AG04449 (cell line): ENCODE measurements at regions of chr3 and their contacts with region 1.

Region 1: DNA sequence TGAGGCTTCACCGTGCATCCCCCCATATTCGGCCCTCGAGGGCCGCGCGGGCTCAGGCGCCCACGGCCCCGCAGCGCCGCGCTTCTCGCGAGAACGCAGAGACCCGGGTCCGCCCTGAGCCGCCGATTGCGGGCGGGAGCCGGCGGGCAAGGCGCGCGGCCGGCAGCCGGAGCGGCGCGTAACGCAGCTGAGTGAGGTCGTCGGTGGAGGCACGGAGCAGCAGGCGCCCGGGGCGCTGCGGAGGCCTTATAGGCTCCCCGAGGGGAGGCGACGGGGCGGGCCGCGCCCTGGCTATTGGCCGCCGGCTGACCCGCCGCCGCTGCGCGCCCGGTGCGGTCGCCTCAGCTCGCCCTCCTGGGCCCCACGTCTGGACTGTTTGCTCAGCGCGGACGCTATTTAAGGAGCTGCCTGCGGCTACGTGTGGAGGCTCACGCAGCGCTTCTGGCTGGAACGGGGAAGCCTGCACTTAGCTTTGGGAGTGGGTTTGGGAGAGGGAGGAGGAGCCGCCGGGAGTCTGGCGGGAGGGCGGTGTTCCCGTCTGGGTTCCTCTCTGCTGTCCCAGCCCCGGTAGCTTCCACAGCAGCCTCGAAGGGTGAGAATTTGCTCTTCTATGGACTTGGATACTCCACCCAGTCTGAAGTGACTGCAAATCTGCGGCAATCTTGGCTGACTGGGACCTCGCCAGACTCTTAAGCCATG is at the start of gene PLOD2:
- DNase-seq: peak; percentile 83
- H3K4me3 ChIP-seq: peak within 1 kb of the TSS; percentile 93
- CTCF ChIP-seq: no peak

Region 2: GRCh38 chr3:146117406-146118285 is 43.5 kb before region 1 on chr3:
- CTCF ChIA-PET with region 1: interaction called, 4 read pairs
- POLR2A ChIA-PET with region 1: interaction called, 15 read pairs
- DNase-seq: peak; percentile 88
- H3K4me3 ChIP-seq: no peak overlapping the region
- CTCF ChIP-seq: no peak

Region 3: GRCh38 chr3:146125951-146126350 is 35.2 kb before region 1 on chr3:
- CTCF ChIA-PET with region 1: interaction called, 9 read pairs
- POLR2A ChIA-PET with region 1: interaction called, 17 read pairs
- DNase-seq: peak; percentile 83
- H3K4me3 ChIP-seq: no peak overlapping the region
- CTCF ChIP-seq: no peak

Region 4: GRCh38 chr3:146131616-146132410 is 29.3 kb before region 1 on chr3:
- CTCF ChIA-PET with region 1: interaction called, 9 read pairs
- POLR2A ChIA-PET with region 1: interaction called, 17 read pairs
- DNase-seq: peak; percentile 76
- H3K4me3 ChIP-seq: no peak overlapping the region
- CTCF ChIP-seq: no peak

Region 5: DNA sequence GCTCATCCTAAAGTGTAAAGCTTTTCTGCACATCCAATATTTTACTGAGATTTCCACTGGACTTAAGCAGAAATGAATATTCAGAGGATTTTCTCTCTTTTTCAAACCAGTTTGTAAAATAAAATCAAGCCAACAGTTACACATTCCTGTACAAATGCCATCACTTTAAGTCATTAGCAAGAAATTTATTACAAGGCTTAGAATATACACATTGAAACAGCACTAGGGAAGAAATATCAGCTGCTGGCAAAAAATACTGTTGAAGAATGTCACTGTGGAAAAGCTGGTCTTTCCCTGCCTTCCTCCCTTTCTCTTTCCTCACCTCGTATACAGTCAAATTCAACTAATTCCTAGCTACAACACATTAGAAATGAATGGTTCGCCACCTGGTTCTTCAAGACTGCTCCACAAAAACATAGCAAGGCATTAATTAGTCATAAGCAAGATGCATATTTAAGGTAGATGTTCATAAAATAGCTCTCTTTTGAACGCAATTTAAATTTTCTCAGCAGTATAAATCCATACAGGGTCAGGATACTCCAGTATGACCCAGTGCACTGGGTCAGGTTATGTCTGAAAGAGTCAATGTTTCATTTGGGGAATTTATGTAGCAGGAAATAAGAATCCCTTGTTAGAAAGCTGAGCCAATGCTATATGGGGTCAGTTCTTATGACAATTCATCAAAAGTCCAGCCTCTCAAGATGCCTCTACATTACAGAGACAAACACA is 21.4 kb before region 1 on chr3:
- CTCF ChIA-PET with region 1: interaction called, 21 read pairs
- POLR2A ChIA-PET with region 1: interaction called, 15 read pairs
- DNase-seq: no peak
- H3K4me3 ChIP-seq: no peak overlapping the region
- CTCF ChIP-seq: no peak